Naive thymus-derived CD4-positive, alpha-beta T cell (primary cell): ENCODE measurements at regions of chr12 and their contacts with region 1.

Region 1: GRCh38 chr12:40152783-40153383 is 47.0 kb upstream of the SLC2A13 start:
- DNase-seq: peak in 4 of 9 donors; percentile 8 to 39 (median 12)
- ATAC-seq: peak; percentile 65
- H3K4me3 ChIP-seq: no peak overlapping the region
- H3K4me3 Mint-ChIP-seq: no peak overlapping the region
- H3K27ac ChIP-seq: no peak overlapping the region
- H3K27ac Mint-ChIP-seq: no peak overlapping the region
- H3K4me1 ChIP-seq: no peaks in the 10 kb centered on the region
- H3K4me1 Mint-ChIP-seq: peaks cover 0 to 4% (median 0%) of the 10 kb centered on the region in 7 donors
- H3K27me3 ChIP-seq: no peaks in the 10 kb centered on the region
- H3K27me3 Mint-ChIP-seq: peaks cover 0 to 48% (median 5%) of the 10 kb centered on the region in 5 donors

Region 2: GRCh38 chr12:40063414-40063813 is 89.5 kb before region 1 on chr12:
- CTCF ChIA-PET with region 1: no interaction called
- POLR2A ChIA-PET with region 1: no interaction called
- intact Hi-C with region 1: no loop called
- DNase-seq: no peak
- ATAC-seq: no peak
- H3K4me3 ChIP-seq: no peak overlapping the region
- H3K4me3 Mint-ChIP-seq: no peak overlapping the region
- H3K27ac ChIP-seq: no peak overlapping the region
- H3K27ac Mint-ChIP-seq: no peak overlapping the region
- H3K4me1 ChIP-seq: no peaks in the 10 kb centered on the region
- H3K4me1 Mint-ChIP-seq: peaks cover 0 to 3% (median 0%) of the 10 kb centered on the region in 7 donors
- H3K27me3 ChIP-seq: no peaks in the 10 kb centered on the region
- H3K27me3 Mint-ChIP-seq: peaks cover 0 to 2% (median 0%) of the 10 kb centered on the region in 5 donors

Region 3: DNA sequence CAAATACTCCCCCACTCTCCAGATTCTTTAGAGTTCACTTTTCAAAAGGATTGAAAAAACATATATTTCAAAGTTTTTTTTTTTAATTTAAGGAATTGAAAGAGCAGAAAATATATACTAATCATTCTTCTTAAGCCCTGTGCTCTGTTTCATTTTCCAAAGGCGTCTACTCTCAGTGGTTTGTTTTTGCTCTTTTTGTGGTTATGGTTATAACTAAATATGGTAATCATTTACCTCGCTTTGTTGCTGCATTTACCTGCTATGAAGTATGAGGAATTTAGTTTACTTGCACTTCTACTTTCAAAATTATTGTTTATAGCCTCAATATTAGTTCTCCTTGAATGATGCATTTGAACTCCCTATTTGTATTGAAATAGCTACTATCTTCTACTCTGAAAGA is 16.0 kb after region 1 on chr12:
- CTCF ChIA-PET with region 1: interaction called, 4 read pairs
- POLR2A ChIA-PET with region 1: interaction called, 3 read pairs
- intact Hi-C with region 1: loop called in 1 of 2 experiments (anchors 2 kb)
- DNase-seq: no peak
- ATAC-seq: no peak
- H3K4me3 ChIP-seq: no peak overlapping the region
- H3K4me3 Mint-ChIP-seq: peak overlapping the region in 1 of 10 donors; percentile 66
- H3K27ac ChIP-seq: no peak overlapping the region
- H3K27ac Mint-ChIP-seq: no peak overlapping the region
- H3K4me1 ChIP-seq: no peaks in the 10 kb centered on the region
- H3K4me1 Mint-ChIP-seq: peaks cover 0 to 16% (median 0%) of the 10 kb centered on the region in 7 donors
- H3K27me3 ChIP-seq: no peaks in the 10 kb centered on the region
- H3K27me3 Mint-ChIP-seq: peaks cover 0 to 40% (median 13%) of the 10 kb centered on the region in 5 donors

Region 4: DNA sequence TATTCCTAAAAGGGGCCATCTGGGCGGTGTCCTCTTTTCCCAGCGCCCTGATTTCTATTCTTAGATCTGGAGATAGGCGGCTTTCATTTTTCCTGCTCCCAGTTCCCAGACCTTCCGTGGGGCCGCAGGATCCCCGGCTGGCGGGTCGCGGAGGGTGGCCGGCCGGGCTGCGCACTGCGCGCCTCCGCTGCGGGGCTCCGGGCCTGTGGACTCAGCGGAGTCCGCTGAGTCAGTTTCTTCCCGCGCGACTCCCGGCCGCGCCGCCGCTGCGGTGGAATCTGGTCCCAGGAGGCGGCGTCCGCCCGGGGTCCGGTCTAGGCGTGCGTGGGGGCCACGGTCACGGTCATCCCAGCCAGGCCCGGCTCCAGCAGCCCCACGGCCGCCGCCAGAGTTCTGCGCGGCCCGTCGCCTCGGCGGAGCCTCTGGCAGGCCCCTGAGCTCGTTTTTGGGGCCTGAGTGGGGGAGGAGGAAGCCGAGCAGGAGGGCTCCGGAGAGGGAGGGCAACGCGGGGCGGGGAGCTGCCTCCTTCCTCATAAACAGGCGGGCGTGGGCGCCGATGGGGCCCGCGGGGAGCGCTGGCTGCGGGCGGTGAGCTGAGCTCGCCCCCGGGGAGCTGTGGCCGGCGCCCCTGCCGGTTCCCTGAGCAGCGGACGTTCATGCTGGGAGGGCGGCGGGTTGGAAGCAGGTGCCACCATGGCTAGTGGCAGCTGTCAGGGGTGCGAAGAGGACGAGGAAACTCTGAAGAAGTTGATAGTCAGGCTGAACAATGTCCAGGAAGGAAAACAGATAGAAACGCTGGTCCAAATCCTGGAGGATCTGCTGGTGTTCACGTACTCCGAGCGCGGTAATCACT is 71.8 kb after region 1 on chr12 and contains the start of gene LRRK2:
- CTCF ChIA-PET with region 1: no interaction called
- POLR2A ChIA-PET with region 1: no interaction called
- intact Hi-C with region 1: loop called in 1 of 2 experiments (anchors 2 kb)
- DNase-seq: peak in 5 of 9 donors; percentile 1 to 36 (median 3)
- ATAC-seq: peak; percentile 84
- H3K4me3 ChIP-seq: no peak within 1 kb of the TSS
- H3K4me3 Mint-ChIP-seq: peak within 1 kb of the TSS in 9 of 10 donors; percentile 36 to 62 (median 53)
- H3K27ac ChIP-seq: no peak within 1 kb of the TSS
- H3K27ac Mint-ChIP-seq: no peak within 1 kb of the TSS
- H3K4me1 ChIP-seq: no peaks in the 10 kb centered on the region
- H3K4me1 Mint-ChIP-seq: peaks cover 0 to 13% (median 9%) of the 10 kb centered on the region in 7 donors
- H3K27me3 ChIP-seq: peaks cover 0 to 4% of the 10 kb centered on the region in 2 donors
- H3K27me3 Mint-ChIP-seq: peaks cover 52 to 63% (median 58%) of the 10 kb centered on the region in 5 donors
- total RNA-seq, gene LRRK2: 0.16 to 32.2 (median 2.1) TPM in 4 of 5 experiments, not detected in the other

Region 5: GRCh38 chr12:40312982-40313576 is 160.2 kb after region 1 on chr12:
- CTCF ChIA-PET with region 1: no interaction called
- POLR2A ChIA-PET with region 1: no interaction called
- intact Hi-C with region 1: loop called in 1 of 2 experiments (anchors 1 kb)
- DNase-seq: no peak
- ATAC-seq: no peak
- H3K4me3 ChIP-seq: no peak overlapping the region
- H3K4me3 Mint-ChIP-seq: no peak overlapping the region
- H3K27ac ChIP-seq: no peak overlapping the region
- H3K27ac Mint-ChIP-seq: no peak overlapping the region
- H3K4me1 ChIP-seq: no peaks in the 10 kb centered on the region
- H3K4me1 Mint-ChIP-seq: no peaks in the 10 kb centered on the region
- H3K27me3 ChIP-seq: no peaks in the 10 kb centered on the region
- H3K27me3 Mint-ChIP-seq: no peaks in the 10 kb centered on the region

Region 6: GRCh38 chr12:40375076-40375475 is 222.2 kb after region 1 on chr12:
- CTCF ChIA-PET with region 1: no interaction called
- POLR2A ChIA-PET with region 1: no interaction called
- intact Hi-C with region 1: loop called in 1 of 2 experiments (anchors 1 kb)
- DNase-seq: no peak
- ATAC-seq: no peak
- H3K4me3 ChIP-seq: no peak overlapping the region
- H3K4me3 Mint-ChIP-seq: no peak overlapping the region
- H3K27ac ChIP-seq: no peak overlapping the region
- H3K27ac Mint-ChIP-seq: no peak overlapping the region
- H3K4me1 ChIP-seq: no peaks in the 10 kb centered on the region
- H3K4me1 Mint-ChIP-seq: no peaks in the 10 kb centered on the region
- H3K27me3 ChIP-seq: no peaks in the 10 kb centered on the region
- H3K27me3 Mint-ChIP-seq: no peaks in the 10 kb centered on the region

Region 7: DNA sequence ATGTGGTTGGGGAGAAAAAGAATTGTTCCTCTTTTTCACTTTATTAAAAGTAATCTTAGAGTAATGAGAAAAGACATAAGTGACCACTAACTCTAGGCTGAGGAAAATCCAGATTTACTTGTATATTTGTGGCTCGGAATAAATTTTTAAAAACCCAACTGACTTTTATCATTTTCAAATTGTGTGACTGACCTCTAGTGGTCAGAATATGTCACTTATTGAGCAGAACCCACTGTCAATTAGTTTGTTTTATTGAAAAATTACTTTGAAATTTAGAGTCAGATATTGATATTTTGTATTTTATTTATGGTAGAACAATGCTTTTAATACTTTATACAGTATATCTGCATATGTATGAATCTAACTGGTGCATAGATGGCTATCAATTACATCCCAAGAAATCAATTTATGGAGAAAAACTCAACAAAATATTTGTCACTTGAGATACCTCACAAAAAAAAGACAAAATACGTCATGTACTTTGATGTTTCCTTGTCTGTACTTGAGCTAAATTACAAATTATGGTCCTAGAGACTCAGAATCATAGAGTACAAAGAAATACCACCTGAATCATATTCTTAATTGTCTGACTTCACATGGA is 768.8 kb after region 1 on chr12:
- CTCF ChIA-PET with region 1: no interaction called
- POLR2A ChIA-PET with region 1: no interaction called
- intact Hi-C with region 1: loop called in 1 of 2 experiments (anchors 2 kb)
- DNase-seq: no peak
- ATAC-seq: no peak
- H3K4me3 ChIP-seq: no peak overlapping the region
- H3K4me3 Mint-ChIP-seq: no peak overlapping the region
- H3K27ac ChIP-seq: no peak overlapping the region
- H3K27ac Mint-ChIP-seq: no peak overlapping the region
- H3K4me1 ChIP-seq: no peaks in the 10 kb centered on the region
- H3K4me1 Mint-ChIP-seq: peaks cover 0 to 1% (median 0%) of the 10 kb centered on the region in 7 donors
- H3K27me3 ChIP-seq: no peaks in the 10 kb centered on the region
- H3K27me3 Mint-ChIP-seq: peaks cover 0 to 7% (median 0%) of the 10 kb centered on the region in 5 donors